Uterus (tissue), 4 donors: ENCODE measurements at regions of chr4 and their contacts with region 1.

Region 1: DNA sequence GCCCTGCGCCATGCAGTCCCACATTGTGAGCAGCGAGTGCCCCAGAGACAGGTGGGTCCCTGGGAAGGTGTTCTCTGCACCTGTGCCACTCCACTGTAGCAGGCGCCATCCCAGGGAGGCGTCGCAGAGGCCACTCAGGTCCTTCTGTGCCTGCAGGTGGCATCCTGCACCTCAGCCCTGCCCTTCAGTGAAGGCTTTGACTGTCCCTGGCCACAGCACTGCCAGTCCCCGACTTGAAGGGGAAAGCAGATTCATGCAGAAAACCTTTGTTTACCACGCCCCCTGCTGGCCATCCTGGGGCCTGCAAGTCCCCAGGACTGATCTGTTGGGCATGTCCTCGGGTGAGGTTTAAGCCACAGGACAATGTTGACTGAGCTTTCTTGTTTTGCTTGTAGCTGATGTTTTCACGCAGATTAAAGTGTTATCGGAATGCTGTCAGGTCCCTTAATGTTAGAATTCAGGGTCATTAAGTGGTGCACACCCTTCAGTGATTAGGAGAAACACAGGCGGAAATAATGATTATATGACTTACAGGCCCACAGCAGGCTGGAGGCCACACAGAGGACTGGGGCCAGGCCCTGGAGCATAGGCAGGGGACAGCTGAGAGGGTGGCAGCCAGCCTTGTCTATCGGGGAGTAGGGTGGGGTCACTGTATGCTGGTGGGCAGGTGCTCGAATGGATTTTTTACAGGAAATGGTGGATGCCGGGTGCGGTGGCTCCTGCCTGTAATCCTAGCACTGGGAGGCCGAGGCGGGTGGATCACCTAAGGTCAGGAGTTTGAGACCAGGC is 5.0 kb downstream of the TACC3 start:
- DNase-seq: peak; percentile 79 to 83
- H3K4me3 ChIP-seq: no peak overlapping the region
- H3K27ac ChIP-seq: peak overlapping the region in 1 of 2 donors; percentile 52
- H3K4me1 ChIP-seq: peaks cover 0 to 9% of the 10 kb centered on the region in 2 donors
- H3K27me3 ChIP-seq: no peaks in the 10 kb centered on the region
- CTCF ChIP-seq: peak; percentile 86 to 96 (median 90)
- POLR2A ChIP-seq: no peak

Region 2: GRCh38 chr4:1693129-1693896 is 33.0 kb before region 1 on chr4:
- intact Hi-C with region 1: loop called (anchors 5 kb)
- DNase-seq: peak; percentile 55 to 63
- H3K4me3 ChIP-seq: no peak overlapping the region
- H3K27ac ChIP-seq: no peak overlapping the region
- H3K4me1 ChIP-seq: no peaks in the 10 kb centered on the region
- H3K27me3 ChIP-seq: no peaks in the 10 kb centered on the region
- CTCF ChIP-seq: peak; percentile 79 to 86 (median 82)
- POLR2A ChIP-seq: no peak